CD14-positive monocyte (primary cell): ENCODE measurements at regions of chr18 and their contacts with region 1.

Region 1: DNA sequence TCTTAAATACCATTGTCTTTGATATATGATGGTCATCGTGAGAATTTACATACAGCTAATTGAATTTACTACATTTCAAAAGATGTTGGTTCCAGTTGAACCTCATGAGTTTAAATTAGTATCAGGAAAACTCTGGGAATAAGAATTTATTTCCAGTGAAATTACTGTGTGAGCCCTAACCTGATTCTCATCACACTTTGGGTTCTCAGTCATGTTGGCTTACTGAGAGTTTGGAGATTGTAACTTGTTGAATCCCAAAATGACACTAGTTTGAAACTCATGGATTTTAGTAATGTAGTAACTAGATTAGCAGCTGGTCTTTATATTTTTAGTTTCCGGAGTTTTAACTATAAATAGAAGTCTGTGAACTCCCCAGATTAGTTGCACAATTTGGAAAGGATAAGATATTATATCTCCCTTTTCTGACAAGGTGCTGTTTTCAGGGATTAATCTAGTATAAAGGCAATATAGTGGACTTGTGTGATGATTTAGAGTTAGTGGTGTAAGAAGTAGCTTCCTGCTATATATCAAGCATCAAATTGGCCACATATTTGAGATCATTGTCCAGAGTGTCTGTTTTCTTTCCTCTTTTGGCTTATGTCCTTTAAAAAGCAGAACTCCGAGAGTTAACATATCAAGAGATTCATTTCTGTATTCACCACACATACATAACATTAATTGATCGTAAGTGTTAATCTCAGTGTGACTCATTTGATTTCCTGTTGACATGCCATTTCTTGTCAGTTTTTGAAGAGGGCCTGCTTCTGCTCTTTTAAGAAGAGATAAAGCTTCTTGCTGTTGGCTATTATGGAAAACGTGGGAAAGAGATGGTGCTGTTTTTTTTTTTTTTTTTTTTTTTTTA is 15.7 kb downstream of the NDUFV2 start:
- DNase-seq: peak; percentile 59 to 81 (median 74)
- H3K4me3 ChIP-seq: peak overlapping the region in 1 of 3 experiments; percentile 62
- H3K4me3 Mint-ChIP-seq: peak overlapping the region in 1 of 2 donors; percentile 33
- H3K27ac ChIP-seq: peak overlapping the region in 1 of 2 donors; percentile 92
- H3K27ac Mint-ChIP-seq: peak overlapping the region; percentile 79 to 98 (median 84)
- H3K4me1 ChIP-seq: peaks cover 34 to 57% of the 10 kb centered on the region in 2 donors
- H3K4me1 Mint-ChIP-seq: peaks cover 50% of the 10 kb centered on the region
- H3K27me3 ChIP-seq: no peaks in the 10 kb centered on the region
- H3K27me3 Mint-ChIP-seq: no peaks in the 10 kb centered on the region
- CTCF ChIP-seq: no peak

Region 2: GRCh38 chr18:9136315-9137155 is 18.3 kb after region 1 on chr18 and contains the start of gene ANKRD12:
- intact Hi-C with region 1: loop called in 1 of 2 experiments (anchors 2 kb)
- DNase-seq: peak; percentile 98 to 99 (median 98)
- H3K4me3 ChIP-seq: peak within 1 kb of the TSS; percentile 84 to 100 (median 88)
- H3K4me3 Mint-ChIP-seq: peak within 1 kb of the TSS; percentile 91 to 95
- H3K27ac ChIP-seq: peak within 1 kb of the TSS; percentile 97 to 100
- H3K27ac Mint-ChIP-seq: peak within 1 kb of the TSS; percentile 98 to 100 (median 99)
- H3K4me1 ChIP-seq: peaks cover 31 to 50% of the 10 kb centered on the region in 2 donors
- H3K4me1 Mint-ChIP-seq: peaks cover 47% of the 10 kb centered on the region
- H3K27me3 ChIP-seq: no peaks in the 10 kb centered on the region
- H3K27me3 Mint-ChIP-seq: no peaks in the 10 kb centered on the region
- CTCF ChIP-seq: no peak
- polyA plus RNA-seq, gene ANKRD12: 9.3 to 15.5 (median 15.4) TPM

Region 3: GRCh38 chr18:9153256-9153655 is 35.0 kb after region 1 on chr18:
- intact Hi-C with region 1: no loop called
- DNase-seq: no peak
- H3K4me3 ChIP-seq: no peak overlapping the region
- H3K4me3 Mint-ChIP-seq: peak overlapping the region in 1 of 2 donors; percentile 5
- H3K27ac ChIP-seq: peak overlapping the region in 1 of 2 donors; percentile 71
- H3K27ac Mint-ChIP-seq: peak overlapping the region; percentile 5 to 85 (median 72)
- H3K4me1 ChIP-seq: peaks cover 39 to 62% of the 10 kb centered on the region in 2 donors
- H3K4me1 Mint-ChIP-seq: peaks cover 70% of the 10 kb centered on the region
- H3K27me3 ChIP-seq: no peaks in the 10 kb centered on the region
- H3K27me3 Mint-ChIP-seq: no peaks in the 10 kb centered on the region
- CTCF ChIP-seq: no peak